IMR-90 (cell line): ENCODE measurements at regions of chrX and their contacts with region 1.

Region 1: GRCh38 chrX:37349221-37350064 is at the start of gene PRRG1:
- DNase-seq: peak; percentile 83
- ATAC-seq: peak; percentile 82
- H3K4me3 ChIP-seq: peak within 1 kb of the TSS; percentile 96
- H3K27ac ChIP-seq: peak within 1 kb of the TSS; percentile 99
- H3K4me1 ChIP-seq: peaks cover 5% of the 10 kb centered on the region
- H3K27me3 ChIP-seq: no peaks in the 10 kb centered on the region
- CTCF ChIP-seq: no peak
- POLR2A ChIP-seq: peak; percentile 80
- RAD21 ChIP-seq: no peak
- total RNA-seq, gene PRRG1: 11.1 and 16.1 TPM in 2 replicates

Region 2: GRCh38 chrX:37314536-37314935 is 34.9 kb before region 1 on chrX:
- CTCF ChIA-PET with region 1: no interaction called
- POLR2A ChIA-PET with region 1: no interaction called
- dilution Hi-C with region 1: no loop called
- in situ Hi-C with region 1: no loop called
- intact Hi-C with region 1: loop called (anchors 2 kb)
- DNase-seq: peak; percentile 64
- ATAC-seq: peak; percentile 84
- H3K4me3 ChIP-seq: no peak overlapping the region
- H3K27ac ChIP-seq: peak overlapping the region; percentile 43; the same call in 1 of the 2 replicates
- H3K4me1 ChIP-seq: peaks cover 6% of the 10 kb centered on the region
- H3K27me3 ChIP-seq: 0 out of 2 replicates have a peak, but pooled peaks cover 2% of the 10 kb centered on the region
- CTCF ChIP-seq: no peak
- POLR2A ChIP-seq: no peak
- RAD21 ChIP-seq: no peak

Region 3: GRCh38 chrX:37423860-37424464 is 74.5 kb after region 1 on chrX:
- CTCF ChIA-PET with region 1: no interaction called
- POLR2A ChIA-PET with region 1: no interaction called
- dilution Hi-C with region 1: no loop called
- in situ Hi-C with region 1: no loop called
- intact Hi-C with region 1: loop called (anchors 5 kb)
- DNase-seq: peak; percentile 29
- ATAC-seq: peak; percentile 42
- H3K4me3 ChIP-seq: no peak overlapping the region
- H3K27ac ChIP-seq: no peak overlapping the region
- H3K4me1 ChIP-seq: no peaks in the 10 kb centered on the region
- H3K27me3 ChIP-seq: no peaks in the 10 kb centered on the region
- CTCF ChIP-seq: no peak
- POLR2A ChIP-seq: no peak
- RAD21 ChIP-seq: no peak

Region 4: DNA sequence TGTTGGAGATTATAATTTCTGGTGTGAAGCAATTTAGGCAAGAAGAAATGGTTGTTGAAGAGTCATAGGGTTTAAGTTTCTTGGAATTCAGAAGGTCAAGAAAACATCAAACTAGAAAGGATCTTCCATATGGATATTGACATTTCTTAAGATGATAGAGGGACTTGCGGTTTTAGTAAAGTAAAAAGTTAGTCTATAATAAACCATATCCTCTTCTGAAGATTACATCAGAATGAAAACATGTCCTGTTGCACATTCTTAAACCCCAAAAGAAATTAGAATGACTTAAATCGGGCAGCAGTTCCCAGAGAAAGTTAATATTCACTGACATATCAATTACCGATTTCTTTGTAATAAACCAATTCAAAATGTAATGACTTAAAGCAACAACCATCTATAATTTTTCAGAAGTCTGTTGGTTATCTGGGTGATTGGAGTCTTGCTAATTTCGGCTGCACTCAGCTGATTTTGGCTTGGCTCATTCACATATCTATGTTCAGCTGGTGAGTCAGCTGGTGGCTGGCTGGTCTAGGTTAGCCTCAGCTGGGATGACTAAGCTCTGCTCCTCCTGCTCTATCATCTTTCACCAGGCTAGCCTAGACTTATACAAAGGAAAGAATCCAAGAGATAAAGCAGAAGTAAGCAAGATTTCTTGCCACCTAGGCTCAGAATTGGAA is 522.3 kb after region 1 on chrX:
- CTCF ChIA-PET with region 1: no interaction called
- POLR2A ChIA-PET with region 1: no interaction called
- dilution Hi-C with region 1: no loop called
- in situ Hi-C with region 1: no loop called
- intact Hi-C with region 1: loop called (anchors 5 kb)
- DNase-seq: peak; percentile 93
- ATAC-seq: peak; percentile 96
- H3K4me3 ChIP-seq: no peak overlapping the region
- H3K27ac ChIP-seq: no peak overlapping the region
- H3K4me1 ChIP-seq: peaks cover 3% of the 10 kb centered on the region
- H3K27me3 ChIP-seq: no peaks in the 10 kb centered on the region
- CTCF ChIP-seq: no peak
- POLR2A ChIP-seq: no peak
- RAD21 ChIP-seq: no peak